Caco-2 (cell line): ENCODE measurements at regions of chr6 and their contacts with region 1.

Region 1: DNA sequence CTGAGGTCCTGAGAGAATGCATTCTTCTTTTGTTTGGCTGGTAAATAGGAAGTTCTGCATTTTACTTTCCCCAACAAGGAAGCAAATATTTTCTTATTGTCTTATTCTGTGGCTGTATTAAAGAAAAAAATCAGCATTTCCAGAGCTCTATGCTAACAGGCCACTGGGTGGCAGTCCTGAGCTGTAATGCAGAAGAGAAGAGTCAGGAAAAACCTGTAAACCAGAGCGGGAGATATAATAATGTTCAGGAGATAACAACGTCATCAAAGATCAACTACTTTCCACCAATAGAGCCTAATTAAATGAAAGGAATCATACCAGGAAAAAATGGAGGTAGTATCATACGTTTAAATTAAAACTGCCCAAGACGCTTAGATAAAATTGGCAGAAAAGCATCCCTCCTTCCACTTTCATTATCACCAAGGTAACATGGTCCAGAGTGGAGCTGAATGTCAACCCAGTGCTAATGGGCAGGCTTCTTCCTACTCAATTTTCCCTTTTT is 55.6 kb upstream of the CARMIL1 start:
- DNase-seq: peak; percentile 43 to 68
- H3K4me3 ChIP-seq: no peak overlapping the region
- H3K4me3 Mint-ChIP-seq: peak overlapping the region; percentile 25
- H3K27ac Mint-ChIP-seq: no peak overlapping the region
- H3K4me1 ChIP-seq: no peaks in the 10 kb centered on the region
- H3K4me1 Mint-ChIP-seq: peaks cover 13% of the 10 kb centered on the region
- H3K27me3 ChIP-seq: no peaks in the 10 kb centered on the region
- H3K27me3 Mint-ChIP-seq: no peaks in the 10 kb centered on the region
- CTCF ChIP-seq: peak; percentile 57 to 83

Region 2: DNA sequence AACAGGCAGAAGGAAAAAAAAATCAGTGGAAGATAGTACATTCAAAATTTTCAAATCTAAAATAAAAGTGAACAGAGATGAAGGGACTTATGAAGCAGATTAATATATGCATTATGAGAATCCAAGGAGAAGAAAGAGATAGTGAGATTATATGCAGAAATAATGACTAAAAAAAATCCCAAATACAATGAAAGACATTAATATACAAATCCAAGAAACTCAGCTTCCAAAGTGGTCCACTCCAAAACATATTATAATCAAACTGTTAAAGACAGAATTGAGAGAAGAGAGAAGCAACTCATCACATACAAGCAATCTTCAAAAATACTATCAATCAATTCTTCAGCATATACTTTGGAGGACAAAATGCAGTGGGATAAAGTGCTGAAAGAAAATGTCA is 17.9 kb before region 1 on chr6:
- CTCF ChIA-PET with region 1: no interaction called
- POLR2A ChIA-PET with region 1: no interaction called
- intact Hi-C with region 1: no loop called
- DNase-seq: no peak
- H3K4me3 ChIP-seq: no peak overlapping the region
- H3K4me3 Mint-ChIP-seq: no peak overlapping the region
- H3K27ac Mint-ChIP-seq: no peak overlapping the region
- H3K4me1 ChIP-seq: 0 out of 2 replicates have a peak, but pooled peaks cover 4% of the 10 kb centered on the region
- H3K4me1 Mint-ChIP-seq: peaks cover 16% of the 10 kb centered on the region
- H3K27me3 ChIP-seq: no peaks in the 10 kb centered on the region
- H3K27me3 Mint-ChIP-seq: peaks cover 2% of the 10 kb centered on the region
- CTCF ChIP-seq: no peak

Region 3: GRCh38 chr6:25263657-25264056 is 40.1 kb after region 1 on chr6:
- CTCF ChIA-PET with region 1: interaction called, 11 read pairs
- POLR2A ChIA-PET with region 1: no interaction called
- intact Hi-C with region 1: loop called (anchors 2 kb)
- DNase-seq: no peak
- H3K4me3 ChIP-seq: no peak overlapping the region
- H3K4me3 Mint-ChIP-seq: no peak overlapping the region
- H3K27ac Mint-ChIP-seq: no peak overlapping the region
- H3K4me1 ChIP-seq: no peaks in the 10 kb centered on the region
- H3K4me1 Mint-ChIP-seq: no peaks in the 10 kb centered on the region
- H3K27me3 ChIP-seq: no peaks in the 10 kb centered on the region
- H3K27me3 Mint-ChIP-seq: no peaks in the 10 kb centered on the region
- CTCF ChIP-seq: no peak

Region 4: GRCh38 chr6:25490018-25490801 is 266.7 kb after region 1 on chr6:
- CTCF ChIA-PET with region 1: interaction called, 22 read pairs
- POLR2A ChIA-PET with region 1: no interaction called
- intact Hi-C with region 1: loop called (anchors 1 kb)
- DNase-seq: peak; percentile 87 to 90
- H3K4me3 ChIP-seq: no peak overlapping the region
- H3K4me3 Mint-ChIP-seq: no peak overlapping the region
- H3K27ac Mint-ChIP-seq: peak overlapping the region; percentile 63
- H3K4me1 ChIP-seq: peaks cover 11% of the 10 kb centered on the region
- H3K4me1 Mint-ChIP-seq: peaks cover 7% of the 10 kb centered on the region
- H3K27me3 ChIP-seq: no peaks in the 10 kb centered on the region
- H3K27me3 Mint-ChIP-seq: no peaks in the 10 kb centered on the region
- CTCF ChIP-seq: peak; percentile 84 to 86

Region 5: GRCh38 chr6:25601800-25602673 is 378.5 kb after region 1 on chr6:
- CTCF ChIA-PET with region 1: interaction called, 3 read pairs
- POLR2A ChIA-PET with region 1: no interaction called
- intact Hi-C with region 1: loop called (anchors 1 kb)
- DNase-seq: peak in 1 of 2 experiments; percentile 18
- H3K4me3 ChIP-seq: no peak overlapping the region
- H3K4me3 Mint-ChIP-seq: no peak overlapping the region
- H3K27ac Mint-ChIP-seq: no peak overlapping the region
- H3K4me1 ChIP-seq: peaks cover 13% of the 10 kb centered on the region
- H3K4me1 Mint-ChIP-seq: peaks cover 15% of the 10 kb centered on the region
- H3K27me3 ChIP-seq: no peaks in the 10 kb centered on the region
- H3K27me3 Mint-ChIP-seq: no peaks in the 10 kb centered on the region
- CTCF ChIP-seq: peak; percentile 39 to 64

Region 6: GRCh38 chr6:25889877-25890853 is 666.6 kb after region 1 on chr6:
- CTCF ChIA-PET with region 1: no interaction called
- POLR2A ChIA-PET with region 1: no interaction called
- intact Hi-C with region 1: loop called (anchors 1 kb)
- DNase-seq: peak; percentile 39 to 67
- H3K4me3 ChIP-seq: no peak overlapping the region
- H3K4me3 Mint-ChIP-seq: no peak overlapping the region
- H3K27ac Mint-ChIP-seq: no peak overlapping the region
- H3K4me1 ChIP-seq: no peaks in the 10 kb centered on the region
- H3K4me1 Mint-ChIP-seq: no peaks in the 10 kb centered on the region
- H3K27me3 ChIP-seq: no peaks in the 10 kb centered on the region
- H3K27me3 Mint-ChIP-seq: no peaks in the 10 kb centered on the region
- CTCF ChIP-seq: peak; percentile 31 to 50